Vagina (tissue), 2 donors: ENCODE measurements at regions of chr15 and their contacts with region 1.

Region 1: GRCh38 chr15:27869697-27870281 is 229.3 kb downstream of the OCA2 start:
- DNase-seq: peak in 1 of 2 donors; percentile 55
- H3K4me3 ChIP-seq: no peak overlapping the region
- H3K27ac ChIP-seq: no peak overlapping the region
- H3K4me1 ChIP-seq: peaks cover 5% of the 10 kb centered on the region
- H3K27me3 ChIP-seq: no peaks in the 10 kb centered on the region
- CTCF ChIP-seq: no peak
- POLR2A ChIP-seq: no peak

Region 2: GRCh38 chr15:27928386-27928785 is 58.6 kb after region 1 on chr15:
- intact Hi-C with region 1: loop called (anchors 10 kb)
- DNase-seq: no peak
- H3K4me3 ChIP-seq: no peak overlapping the region
- H3K27ac ChIP-seq: no peak overlapping the region
- H3K4me1 ChIP-seq: no peaks in the 10 kb centered on the region
- H3K27me3 ChIP-seq: no peaks in the 10 kb centered on the region
- CTCF ChIP-seq: no peak
- POLR2A ChIP-seq: no peak